Mammary epithelial cell (primary cell): ENCODE measurements at regions of chr3 and their contacts with region 1.

Region 1: DNA sequence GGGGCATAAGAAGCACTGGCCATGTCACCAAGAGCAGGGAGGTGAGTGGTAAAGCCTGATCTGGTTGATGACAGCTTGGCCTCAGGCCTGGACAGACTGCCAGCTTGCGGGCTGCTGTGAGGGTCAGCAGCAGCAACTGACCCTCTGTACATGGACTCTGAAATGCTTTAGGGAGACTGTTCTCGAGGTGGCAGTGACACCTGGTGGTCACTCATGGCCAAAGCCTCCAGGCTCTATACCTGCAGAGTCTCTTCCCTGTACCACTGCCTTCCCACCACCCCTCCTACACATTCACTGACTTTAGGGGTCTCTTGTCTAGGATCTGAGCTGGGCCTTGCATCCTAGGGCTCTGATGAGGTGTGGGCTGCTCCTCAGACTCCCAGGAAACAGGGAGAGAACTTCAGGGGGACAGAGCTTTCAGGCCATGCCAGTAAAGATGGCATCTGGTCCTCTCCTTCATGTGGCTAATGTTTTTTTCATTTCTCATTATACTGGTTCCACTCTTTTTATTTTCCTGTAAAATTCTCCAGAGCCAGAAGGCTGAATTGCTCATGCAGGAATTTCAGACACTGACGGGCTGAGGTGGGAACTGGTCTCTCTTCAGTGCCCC is 17.2 kb upstream of the TIMP4 start:
- DNase-seq: no peak
- H3K4me3 ChIP-seq: no peak overlapping the region
- H3K27ac ChIP-seq: no peak overlapping the region
- H3K4me1 ChIP-seq: peaks cover 15% of the 10 kb centered on the region
- H3K27me3 ChIP-seq: no peaks in the 10 kb centered on the region
- CTCF ChIP-seq: peak; percentile 78 to 92

Region 2: DNA sequence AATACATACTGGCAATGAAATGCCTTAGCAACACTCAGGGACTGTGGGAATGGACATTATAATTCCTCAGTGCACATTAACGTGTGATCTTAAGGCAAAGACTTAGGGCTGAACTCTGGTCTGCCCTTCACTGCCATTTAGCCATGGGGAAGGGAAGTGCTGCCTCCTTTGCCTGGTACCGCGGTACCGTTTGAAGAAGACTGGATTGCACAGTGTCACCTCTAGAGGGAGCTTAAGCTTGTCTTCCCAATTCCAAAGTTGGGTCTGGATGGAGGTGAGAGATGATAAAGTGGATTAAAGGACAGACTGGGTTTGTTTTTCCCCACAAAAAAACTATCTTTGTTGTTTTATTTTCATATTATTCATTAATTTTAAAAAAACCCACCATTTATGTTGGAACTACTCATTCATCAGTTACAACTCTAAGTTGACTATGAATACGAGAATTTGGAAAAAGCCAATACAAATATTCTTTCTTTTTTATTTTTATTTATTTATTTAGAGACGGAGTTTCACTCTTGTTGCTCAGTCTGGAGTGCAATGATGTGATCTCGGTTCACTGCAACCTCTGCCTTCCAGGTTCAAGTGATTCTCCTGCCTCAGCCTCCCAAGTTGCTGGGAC is 231.8 kb before region 1 on chr3:
- CTCF ChIA-PET with region 1: no interaction called
- dilution Hi-C with region 1: no loop called
- in situ Hi-C with region 1: no loop called
- intact Hi-C with region 1: loop called (anchors 5 kb)
- DNase-seq: peak; percentile 30
- H3K4me3 ChIP-seq: no peak overlapping the region
- H3K27ac ChIP-seq: no peak overlapping the region
- H3K4me1 ChIP-seq: no peaks in the 10 kb centered on the region
- H3K27me3 ChIP-seq: no peaks in the 10 kb centered on the region
- CTCF ChIP-seq: peak; percentile 74 to 86

Region 3: GRCh38 chr3:12143949-12144504 is 31.9 kb before region 1 on chr3:
- CTCF ChIA-PET with region 1: no interaction called
- dilution Hi-C with region 1: loop called (anchors 5 kb)
- in situ Hi-C with region 1: loop called in 1 of 2 experiments (anchors 5 kb)
- intact Hi-C with region 1: no loop called
- DNase-seq: peak; percentile 20
- H3K4me3 ChIP-seq: no peak overlapping the region
- H3K27ac ChIP-seq: no peak overlapping the region
- H3K4me1 ChIP-seq: peaks cover 8% of the 10 kb centered on the region
- H3K27me3 ChIP-seq: no peaks in the 10 kb centered on the region
- CTCF ChIP-seq: no peak

Region 4: DNA sequence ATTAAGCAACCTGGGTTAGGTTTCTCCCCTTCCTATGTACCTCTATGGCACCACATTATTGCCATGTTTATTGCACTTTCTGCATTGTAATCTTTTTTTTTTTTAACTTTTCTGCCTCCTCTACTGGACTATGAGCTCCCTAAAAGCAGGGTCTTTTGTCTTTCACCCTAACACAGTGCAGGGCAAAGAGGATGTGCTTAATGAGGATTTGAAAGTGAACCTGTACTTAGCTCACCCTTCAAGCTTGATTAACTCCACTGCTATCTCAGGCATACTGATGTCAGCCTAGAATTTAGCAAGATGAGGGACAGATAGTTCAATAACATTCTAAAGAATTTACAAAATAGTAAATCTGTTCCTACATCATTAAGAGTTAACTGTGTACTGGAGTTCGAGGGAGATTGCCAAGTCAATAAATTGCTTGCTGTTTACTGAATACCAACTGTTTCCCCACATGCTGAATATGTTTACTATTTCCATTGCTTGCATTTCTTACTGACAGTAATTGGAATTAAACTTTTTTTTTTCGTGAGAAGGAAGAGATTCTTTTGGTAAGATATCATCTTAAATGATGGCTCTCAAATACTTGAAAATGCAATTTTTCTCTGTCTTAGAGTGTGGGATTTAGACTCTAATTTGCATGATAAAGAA is 97.2 kb after region 1 on chr3:
- CTCF ChIA-PET with region 1: no interaction called
- dilution Hi-C with region 1: loop called (anchors 5 kb)
- in situ Hi-C with region 1: no loop called
- intact Hi-C with region 1: no loop called
- DNase-seq: no peak
- H3K4me3 ChIP-seq: no peak overlapping the region
- H3K27ac ChIP-seq: no peak overlapping the region
- H3K4me1 ChIP-seq: no peaks in the 10 kb centered on the region
- H3K27me3 ChIP-seq: no peaks in the 10 kb centered on the region
- CTCF ChIP-seq: no peak

Region 5: GRCh38 chr3:12484198-12484974 is 308.4 kb after region 1 on chr3 and contains the start of gene TSEN2:
- CTCF ChIA-PET with region 1: interaction called, 3 read pairs
- dilution Hi-C with region 1: no loop called
- in situ Hi-C with region 1: no loop called
- intact Hi-C with region 1: loop called (anchors 1 kb)
- DNase-seq: peak; percentile 95
- H3K4me3 ChIP-seq: peak within 1 kb of the TSS; percentile 62 to 82 (median 79)
- H3K27ac ChIP-seq: peak within 1 kb of the TSS; percentile 38
- H3K4me1 ChIP-seq: peaks cover 19% of the 10 kb centered on the region
- H3K27me3 ChIP-seq: no peaks in the 10 kb centered on the region
- CTCF ChIP-seq: peak in 1 of 2 donors; percentile 38
- total RNA-seq, gene TSEN2: 16.0 to 24.6 TPM